ENCODE measurements at regions of chr15 and their contacts with region 1.

Region 1: GRCh38 chr15:40098489-40099261 is 10.0 kb downstream of the BMF start:
- DNase-seq: peak; percentile 89
- H3K4me3 ChIP-seq: peak overlapping the region; percentile 47
- H3K27ac ChIP-seq: peak overlapping the region; percentile 85
- H3K4me1 ChIP-seq: peaks cover 91% of the 10 kb centered on the region
- CTCF ChIP-seq: no peak

Region 2: GRCh38 chr15:40044717-40045571 is 53.7 kb before region 1 on chr15:
- CTCF ChIA-PET with region 1: interaction called, 11 read pairs
- POLR2A ChIA-PET with region 1: interaction called, 37 read pairs
- intact Hi-C with region 1: no loop called
- DNase-seq: peak; percentile 87
- H3K4me3 ChIP-seq: no peak overlapping the region
- H3K27ac ChIP-seq: peak overlapping the region; percentile 15
- H3K4me1 ChIP-seq: peaks cover 68% of the 10 kb centered on the region
- CTCF ChIP-seq: peak; percentile 97

Region 3: DNA sequence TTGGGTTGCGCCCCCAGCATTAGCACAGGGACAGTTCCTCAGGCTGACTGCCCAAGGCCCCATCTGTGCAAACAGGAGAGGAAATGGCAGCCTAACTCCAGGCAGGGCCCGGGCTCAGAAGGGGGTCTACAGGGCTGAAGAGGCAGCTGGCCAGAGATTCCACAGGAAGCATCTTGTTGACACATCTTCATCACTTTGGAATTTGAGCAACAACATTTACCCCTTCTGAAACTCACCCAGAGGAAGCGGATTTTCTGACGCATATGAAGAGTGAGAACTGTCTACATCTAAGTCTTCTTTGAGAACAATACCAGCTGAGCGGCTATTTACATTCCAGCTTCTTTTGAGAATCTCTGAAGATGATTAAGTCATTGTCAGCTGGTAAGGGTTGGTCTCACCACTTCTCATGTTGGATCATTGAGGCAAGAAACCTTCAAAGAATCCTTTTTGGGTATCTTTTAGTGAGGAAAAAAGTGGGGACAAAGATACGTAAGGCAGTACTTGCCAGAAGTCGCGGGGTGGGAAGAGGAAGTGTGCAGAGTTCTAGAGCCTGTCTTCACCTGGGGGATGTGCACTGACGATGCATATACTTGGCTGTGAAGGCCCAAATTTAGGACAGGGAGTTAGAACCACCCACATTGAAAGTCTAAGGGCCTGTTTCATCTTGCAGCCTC is 34.3 kb before region 1 on chr15:
- CTCF ChIA-PET with region 1: no interaction called
- POLR2A ChIA-PET with region 1: interaction called, 10 read pairs
- intact Hi-C with region 1: loop called (anchors 1 kb)
- DNase-seq: peak; percentile 81
- H3K4me3 ChIP-seq: peak overlapping the region; percentile 25
- H3K27ac ChIP-seq: peak overlapping the region; percentile 82
- H3K4me1 ChIP-seq: peaks cover 41% of the 10 kb centered on the region
- CTCF ChIP-seq: no peak

Region 4: DNA sequence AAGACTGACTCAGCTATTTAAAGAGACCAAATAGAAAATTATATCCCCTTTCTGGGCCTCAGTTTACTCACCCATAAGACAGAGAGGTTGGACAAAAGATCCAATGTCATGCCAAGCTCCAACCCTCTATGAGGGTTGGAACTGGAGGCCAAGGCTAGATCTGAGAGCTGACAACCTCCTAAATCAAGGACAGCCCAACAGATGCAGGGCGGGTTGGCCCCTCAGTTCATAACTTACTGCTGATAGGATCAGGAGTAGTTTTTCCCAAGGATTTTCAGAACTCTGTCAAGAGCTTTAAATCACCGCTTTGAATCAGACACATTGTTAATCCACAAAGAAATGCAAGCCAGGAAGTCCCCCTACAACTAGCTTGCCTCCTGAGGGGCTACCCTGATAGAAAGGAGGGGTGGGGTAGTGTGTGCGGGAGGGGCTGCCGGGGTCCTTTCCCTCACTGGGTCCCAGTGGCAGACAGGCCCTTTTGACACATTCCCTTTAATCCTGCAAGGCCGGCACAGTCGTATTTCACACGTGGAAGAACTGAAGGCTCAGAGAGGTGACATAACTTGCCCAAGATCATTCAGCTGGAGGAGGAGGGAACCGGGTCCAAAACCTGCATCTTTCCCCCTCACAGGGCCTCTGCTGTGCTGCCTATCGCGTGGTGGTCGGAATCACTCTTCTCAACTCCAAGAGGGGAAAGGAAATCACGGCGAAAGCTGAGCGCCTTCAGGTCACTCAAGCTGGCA is 11.4 kb before region 1 on chr15:
- CTCF ChIA-PET with region 1: interaction called, 3 read pairs
- POLR2A ChIA-PET with region 1: interaction called, 13 read pairs
- intact Hi-C with region 1: no loop called
- DNase-seq: no peak
- H3K4me3 ChIP-seq: no peak overlapping the region
- H3K27ac ChIP-seq: no peak overlapping the region
- H3K4me1 ChIP-seq: peaks cover 36% of the 10 kb centered on the region
- CTCF ChIP-seq: no peak

Region 5: DNA sequence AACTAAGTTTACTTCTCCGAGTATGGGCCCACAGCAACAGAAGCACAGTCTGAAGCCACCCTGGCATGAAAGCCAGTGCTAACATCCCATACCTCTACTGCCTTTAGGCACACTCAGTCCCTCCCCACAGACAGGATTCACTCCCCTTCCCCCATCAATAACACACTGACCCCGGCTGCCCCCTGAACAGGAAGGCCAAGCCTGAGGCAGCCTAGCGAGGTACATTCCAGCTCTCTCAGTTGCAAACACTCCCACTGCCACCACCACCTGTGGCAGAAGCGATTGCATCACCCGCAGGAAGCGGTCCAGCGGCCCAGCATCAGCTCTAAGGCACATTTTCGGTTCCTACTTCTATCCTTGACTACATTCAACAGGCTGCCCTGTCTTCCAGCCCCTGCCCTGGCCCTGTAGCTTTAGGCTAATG is 17.0 kb after region 1 on chr15:
- CTCF ChIA-PET with region 1: interaction called, 24 read pairs
- POLR2A ChIA-PET with region 1: interaction called, 146 read pairs
- intact Hi-C with region 1: no loop called
- DNase-seq: peak; percentile 97
- H3K4me3 ChIP-seq: peak overlapping the region; percentile 49
- H3K27ac ChIP-seq: peak overlapping the region; percentile 86
- H3K4me1 ChIP-seq: peaks cover 80% of the 10 kb centered on the region
- CTCF ChIP-seq: no peak

Region 6: DNA sequence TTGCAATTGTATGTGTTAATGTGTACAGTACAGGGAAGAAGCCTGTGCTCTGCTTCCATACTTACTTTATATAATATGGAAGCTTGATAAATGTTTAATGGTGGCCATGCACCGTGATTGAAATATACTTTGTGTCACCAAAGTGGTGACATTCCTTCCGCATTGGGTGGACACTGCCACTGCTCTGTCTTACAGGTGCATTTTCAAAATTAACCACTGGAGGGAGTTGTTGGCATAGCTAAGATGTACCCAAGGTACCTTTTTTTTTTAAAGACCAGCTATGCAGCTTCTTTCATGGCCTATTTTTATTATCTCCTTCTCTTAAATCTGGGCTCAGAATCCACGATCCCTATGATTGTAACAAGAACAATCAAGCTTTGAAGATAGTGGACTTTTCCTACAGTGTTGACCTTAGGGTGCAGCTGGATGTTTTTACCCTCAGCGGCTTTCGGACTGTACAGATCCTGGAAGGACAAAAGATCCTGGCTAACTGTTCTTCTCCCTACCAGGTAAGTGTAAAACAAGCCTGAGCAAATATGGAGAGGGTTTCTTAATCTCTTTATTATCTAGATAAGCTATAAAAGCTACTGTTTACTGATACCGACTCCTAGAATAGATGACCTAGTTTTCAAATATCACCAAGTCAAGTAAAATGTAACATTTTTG is 118.6 kb after region 1 on chr15:
- CTCF ChIA-PET with region 1: no interaction called
- POLR2A ChIA-PET with region 1: no interaction called
- intact Hi-C with region 1: loop called (anchors 5 kb)
- DNase-seq: peak; percentile 77
- H3K4me3 ChIP-seq: no peak overlapping the region
- H3K27ac ChIP-seq: no peak overlapping the region
- H3K4me1 ChIP-seq: no peaks in the 10 kb centered on the region
- CTCF ChIP-seq: peak; percentile 90

Region 7: GRCh38 chr15:41085029-41085428 is 986.4 kb after region 1 on chr15:
- CTCF ChIA-PET with region 1: no interaction called
- POLR2A ChIA-PET with region 1: no interaction called
- intact Hi-C with region 1: no loop called
- DNase-seq: no peak
- H3K4me3 ChIP-seq: no peak overlapping the region
- H3K27ac ChIP-seq: no peak overlapping the region
- H3K4me1 ChIP-seq: peaks cover 4% of the 10 kb centered on the region
- CTCF ChIP-seq: no peak

Measured in OCI-LY7 (cell line).